ENCODE measurements at regions of chr1 and their contacts with region 1.

Region 1: DNA sequence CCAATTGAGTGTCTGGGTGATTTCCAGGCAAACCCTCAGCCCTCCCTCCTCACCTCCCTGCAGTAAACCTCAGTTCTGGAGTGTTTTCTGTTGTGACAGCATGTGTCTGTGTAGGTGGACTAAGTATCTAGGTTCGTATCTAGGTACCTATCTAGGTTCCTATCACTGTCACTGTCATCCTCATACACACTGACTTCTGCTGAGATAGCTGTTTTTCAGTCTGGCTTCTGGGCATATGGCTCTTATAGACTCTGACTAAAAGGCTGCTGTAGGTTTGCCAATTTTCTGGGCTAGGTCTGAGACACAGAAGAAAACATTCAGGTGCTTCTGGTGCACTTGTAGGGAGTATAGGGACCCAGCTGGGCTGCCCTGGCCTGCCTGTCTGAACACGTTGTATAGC is 8.1 kb upstream of the TRIM67 start:
- DNase-seq: no peak
- H3K4me3 ChIP-seq: no peak overlapping the region
- CTCF ChIP-seq: no peak

Region 2: GRCh38 chr1:231106347-231106746 is 47.4 kb before region 1 on chr1:
- in situ Hi-C with region 1: no loop called
- DNase-seq: peak; percentile 55
- H3K4me3 ChIP-seq: no peak overlapping the region
- CTCF ChIP-seq: no peak

Region 3: GRCh38 chr1:231194843-231195516 is 41.3 kb after region 1 on chr1:
- in situ Hi-C with region 1: loop called (anchors 5 kb)
- DNase-seq: no peak
- H3K4me3 ChIP-seq: no peak overlapping the region
- CTCF ChIP-seq: no peak

Region 4: GRCh38 chr1:231211005-231211857 is 57.5 kb after region 1 on chr1:
- in situ Hi-C with region 1: no loop called
- DNase-seq: peak; percentile 16
- H3K4me3 ChIP-seq: peak overlapping the region; percentile 33
- CTCF ChIP-seq: peak; percentile 83